ENCODE measurements at regions of chr2 and their contacts with region 1.

Region 1: GRCh38 chr2:173210270-173211196 is 134.9 kb downstream of the MAP3K20 start:
- DNase-seq: peak; percentile 63
- H3K4me3 Mint-ChIP-seq: no peak overlapping the region
- H3K27ac Mint-ChIP-seq: no peak overlapping the region
- H3K4me1 Mint-ChIP-seq: no peaks in the 10 kb centered on the region
- H3K27me3 Mint-ChIP-seq: no peaks in the 10 kb centered on the region

Region 2: DNA sequence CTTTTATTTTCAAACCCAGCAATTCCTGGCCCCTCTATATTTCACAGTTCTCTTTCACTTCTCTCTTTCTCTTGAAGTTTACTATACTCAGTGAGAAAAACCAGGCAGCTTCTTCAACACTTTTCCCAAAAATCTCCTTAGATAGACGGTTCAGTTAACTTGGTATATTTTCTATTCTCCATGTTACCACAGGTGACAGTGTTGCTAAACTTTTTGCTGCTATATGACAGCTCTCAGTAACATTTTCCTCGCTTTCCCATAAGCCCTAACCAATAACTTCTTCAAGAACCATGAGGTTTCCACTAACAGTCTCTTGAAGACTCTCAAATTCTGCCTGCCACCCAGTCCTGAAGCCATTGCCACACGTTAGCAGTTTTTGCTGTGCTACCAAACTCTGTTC is 1642.4 kb before region 1 on chr2:
- CTCF ChIA-PET with region 1: no interaction called
- POLR2A ChIA-PET with region 1: no interaction called
- DNase-seq: no peak
- H3K4me3 Mint-ChIP-seq: no peak overlapping the region
- H3K27ac Mint-ChIP-seq: no peak overlapping the region
- H3K4me1 Mint-ChIP-seq: no peaks in the 10 kb centered on the region
- H3K27me3 Mint-ChIP-seq: peaks cover 12% of the 10 kb centered on the region

Region 3: GRCh38 chr2:173027181-173028128 is 183.1 kb before region 1 on chr2:
- CTCF ChIA-PET with region 1: interaction called, 23 read pairs
- POLR2A ChIA-PET with region 1: no interaction called
- DNase-seq: peak; percentile 87
- H3K4me3 Mint-ChIP-seq: no peak overlapping the region
- H3K27ac Mint-ChIP-seq: no peak overlapping the region
- H3K4me1 Mint-ChIP-seq: peaks cover 3% of the 10 kb centered on the region
- H3K27me3 Mint-ChIP-seq: peaks cover 13% of the 10 kb centered on the region

Region 4: DNA sequence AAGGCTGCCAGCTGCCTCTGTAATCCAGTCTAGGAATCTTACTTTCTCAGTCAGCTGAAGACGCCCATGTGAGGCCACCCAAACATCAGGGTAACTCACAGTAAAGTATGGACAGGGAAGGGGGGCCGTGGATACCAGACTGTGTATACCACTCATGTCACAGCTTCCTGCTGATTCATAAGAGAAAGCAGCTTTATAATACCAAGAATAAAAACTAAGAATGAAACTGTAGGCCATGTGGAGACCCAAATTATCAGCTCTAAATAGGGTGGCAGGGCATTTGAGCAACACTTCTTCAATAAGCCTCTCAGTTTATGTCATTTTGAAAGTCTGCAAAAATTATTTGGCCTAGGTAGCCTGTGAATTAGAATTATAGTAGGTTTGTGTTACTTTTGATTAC is 29.1 kb after region 1 on chr2:
- CTCF ChIA-PET with region 1: no interaction called
- POLR2A ChIA-PET with region 1: no interaction called
- DNase-seq: no peak
- H3K4me3 Mint-ChIP-seq: no peak overlapping the region
- H3K27ac Mint-ChIP-seq: no peak overlapping the region
- H3K4me1 Mint-ChIP-seq: peaks cover 12% of the 10 kb centered on the region
- H3K27me3 Mint-ChIP-seq: no peaks in the 10 kb centered on the region

Measured in activated CD4-positive, alpha-beta T cell treated with anti-CD3 and anti-CD28 coated beads, Interleukin-2, amount 10 ng/mL, durations not matched to agents 7 days and 5 days (primary cell).